ENCODE measurements at regions of chr7 and their contacts with region 1.

Region 1: DNA sequence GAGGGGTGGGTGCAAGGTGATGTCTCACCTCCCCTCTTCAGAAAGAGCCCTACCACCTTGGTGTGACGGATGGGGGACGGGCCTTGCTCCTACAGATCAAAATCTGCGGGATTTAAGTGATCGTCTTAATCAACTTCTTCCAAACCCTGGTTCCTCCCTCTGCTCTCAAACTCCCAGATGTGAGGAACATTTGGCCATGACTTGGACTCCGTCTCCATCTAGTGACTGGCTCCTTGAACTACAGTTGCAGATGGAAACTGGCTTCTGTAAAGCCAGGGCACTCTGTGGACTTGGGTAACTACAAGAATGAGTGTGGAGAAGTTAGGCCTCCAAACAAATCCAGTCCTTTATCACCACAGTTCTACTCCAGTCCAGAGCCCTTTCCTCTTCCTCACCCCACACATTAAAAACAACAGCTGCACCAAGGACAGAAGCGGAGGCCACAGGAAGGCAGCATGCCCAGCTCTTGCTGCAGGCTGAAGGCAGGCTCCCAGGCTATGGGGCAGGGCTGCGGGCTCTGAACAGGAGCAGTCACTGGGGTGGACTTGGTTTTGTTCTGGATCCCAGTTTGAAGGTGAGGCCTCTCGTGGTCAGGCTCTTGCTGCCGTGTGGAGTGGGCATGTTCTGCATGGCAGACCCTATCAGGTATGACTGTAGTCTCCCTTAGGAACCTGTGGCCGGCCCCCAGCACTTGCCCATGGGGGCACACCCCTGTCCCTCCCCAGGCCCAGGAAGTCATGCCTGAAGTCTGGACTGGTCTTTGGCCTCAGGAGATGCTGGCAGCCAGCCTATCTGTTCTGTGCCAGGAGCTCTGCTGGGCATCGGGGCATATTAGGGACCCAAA is 79.4 kb downstream of the VWC2 start:
- DNase-seq: peak; percentile 24
- H3K4me3 ChIP-seq: no peak overlapping the region
- H3K27ac ChIP-seq: no peak overlapping the region
- H3K4me1 ChIP-seq: no peaks in the 10 kb centered on the region
- H3K27me3 ChIP-seq: no peaks in the 10 kb centered on the region
- CTCF ChIP-seq: peak; percentile 54 to 70 (median 63)
- EP300 ChIP-seq: no peak
- POLR2A ChIP-seq: no peak

Region 2: DNA sequence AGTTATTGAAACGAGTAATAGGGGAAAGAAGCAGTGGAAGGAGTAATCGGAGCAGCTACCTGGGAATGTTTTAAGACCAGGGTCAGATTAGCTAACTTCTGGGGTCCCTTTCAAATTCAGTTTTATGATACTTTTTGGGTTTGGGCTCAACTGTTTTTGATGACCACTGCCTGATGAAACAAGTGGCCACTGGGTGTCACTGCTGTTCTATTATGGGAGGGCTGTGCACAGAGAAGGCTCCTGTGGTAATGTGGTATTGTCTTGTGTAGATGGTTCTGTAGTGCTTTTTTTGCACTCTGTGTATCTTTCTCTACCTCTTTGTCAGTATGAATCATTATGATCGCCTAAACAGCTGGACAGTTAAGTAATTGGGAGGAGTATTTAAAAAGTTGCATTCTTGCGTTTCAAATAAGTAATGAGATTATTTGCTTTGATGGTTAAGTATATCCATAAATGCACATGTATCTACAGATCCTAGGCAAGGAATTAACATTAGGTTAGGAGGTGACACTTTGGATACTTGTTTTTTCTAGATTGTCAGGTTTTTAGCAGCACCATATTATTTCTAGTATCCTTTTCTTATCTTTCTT is 1553.2 kb before region 1 on chr7:
- in situ Hi-C with region 1: loop called in 2 of 4 experiments (anchors 25 kb)
- intact Hi-C with region 1: no loop called
- DNase-seq: peak; percentile 22
- H3K4me3 ChIP-seq: no peak overlapping the region
- H3K27ac ChIP-seq: no peak overlapping the region
- H3K4me1 ChIP-seq: no peaks in the 10 kb centered on the region
- H3K27me3 ChIP-seq: no peaks in the 10 kb centered on the region
- CTCF ChIP-seq: peak; percentile 38 to 58 (median 48)
- EP300 ChIP-seq: no peak
- POLR2A ChIP-seq: no peak

Measured in transverse colon (tissue), 4 donors.